ENCODE measurements at regions of chr16 and their contacts with region 1.

Region 1: DNA sequence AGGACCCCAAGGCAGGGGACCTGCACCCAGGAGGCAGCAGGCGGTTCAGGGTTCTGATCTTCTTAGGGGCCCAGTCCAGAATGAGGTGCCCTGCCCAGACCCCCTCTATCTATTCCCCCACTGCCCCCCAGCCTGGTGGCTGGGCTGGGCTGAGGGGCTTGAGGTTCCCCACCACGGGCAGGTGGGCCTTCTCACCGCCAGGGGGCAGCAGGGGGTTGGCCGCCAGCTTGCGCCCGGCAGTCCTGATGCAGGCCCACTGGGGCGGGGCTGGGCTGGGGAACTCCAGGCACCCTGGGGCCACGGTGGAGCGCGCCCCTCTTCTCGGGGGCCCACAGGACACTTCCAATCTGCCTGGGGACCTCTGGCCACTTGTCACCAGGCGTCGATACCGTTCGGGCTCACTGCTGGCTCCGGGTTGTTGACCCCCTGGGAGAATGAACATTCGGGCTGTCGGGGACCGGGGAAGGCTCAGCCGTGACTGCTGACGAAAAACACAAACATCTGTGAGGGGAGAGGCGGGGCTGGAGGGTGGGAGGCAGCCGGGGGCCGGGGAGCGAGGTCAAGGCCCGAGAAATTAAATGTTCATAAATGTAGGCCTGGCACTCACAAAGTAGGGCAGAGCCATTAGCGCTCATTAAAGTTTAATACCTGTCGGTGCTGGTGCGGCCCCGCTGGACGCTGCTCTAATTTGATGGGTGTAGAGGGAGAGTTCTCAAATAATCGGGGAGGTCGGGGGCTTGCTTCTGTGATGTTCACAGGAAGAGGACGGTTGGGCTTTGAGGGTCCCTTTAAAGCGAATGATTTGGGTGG is 219.2 kb upstream of the GSE1 start:
- DNase-seq: peak; percentile 89
- ATAC-seq: peak; percentile 68
- H3K4me3 Mint-ChIP-seq: peak overlapping the region; percentile 38
- H3K27ac Mint-ChIP-seq: no peak overlapping the region
- H3K4me1 Mint-ChIP-seq: peaks cover 43% of the 10 kb centered on the region
- H3K27me3 Mint-ChIP-seq: no peaks in the 10 kb centered on the region
- CTCF ChIP-seq: peak; percentile 94

Region 2: DNA sequence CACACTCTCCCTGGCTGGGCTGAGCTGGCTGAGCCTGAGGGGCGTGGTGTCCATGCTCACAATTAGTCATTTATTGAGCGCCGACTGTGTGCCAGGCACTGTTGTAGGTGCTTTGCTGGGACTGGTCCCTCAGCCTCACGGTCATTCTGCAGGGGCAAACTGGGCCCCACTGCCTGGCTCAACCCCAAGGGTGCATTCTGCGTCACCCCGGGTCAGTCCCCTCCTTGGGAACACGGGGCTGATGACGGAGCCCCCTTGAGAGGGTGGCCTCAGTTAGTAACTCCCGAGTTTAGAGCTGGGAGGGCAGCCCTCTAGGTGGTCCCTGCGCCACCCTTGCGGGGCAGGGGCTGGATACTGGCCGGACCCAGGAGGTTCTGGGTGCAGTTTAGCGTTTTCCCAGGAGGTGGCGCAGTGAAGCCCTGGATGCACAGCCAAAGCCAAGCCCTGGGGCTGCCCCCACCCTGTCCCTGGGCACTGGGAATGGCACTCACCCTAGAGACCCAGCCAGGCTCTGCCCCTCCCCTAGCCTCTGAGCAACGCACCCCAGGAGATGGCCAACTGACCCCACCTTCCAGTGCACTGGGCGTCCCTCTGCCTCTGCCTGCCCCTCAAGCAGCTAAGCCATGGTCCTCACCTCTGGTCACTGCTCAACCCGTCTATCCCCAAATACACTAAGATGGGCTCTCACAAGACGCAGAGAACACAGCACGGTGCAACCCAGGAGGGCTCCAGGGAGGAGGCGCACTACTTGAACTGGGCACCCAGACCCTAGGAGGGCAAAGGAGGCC is 23.9 kb before region 1 on chr16:
- CTCF ChIA-PET with region 1: interaction called, 16 read pairs
- POLR2A ChIA-PET with region 1: no interaction called
- DNase-seq: peak; percentile 84
- ATAC-seq: peak; percentile 73
- H3K4me3 Mint-ChIP-seq: no peak overlapping the region
- H3K27ac Mint-ChIP-seq: no peak overlapping the region
- H3K4me1 Mint-ChIP-seq: peaks cover 21% of the 10 kb centered on the region
- H3K27me3 Mint-ChIP-seq: peaks cover 9% of the 10 kb centered on the region
- CTCF ChIP-seq: peak; percentile 85

Region 3: DNA sequence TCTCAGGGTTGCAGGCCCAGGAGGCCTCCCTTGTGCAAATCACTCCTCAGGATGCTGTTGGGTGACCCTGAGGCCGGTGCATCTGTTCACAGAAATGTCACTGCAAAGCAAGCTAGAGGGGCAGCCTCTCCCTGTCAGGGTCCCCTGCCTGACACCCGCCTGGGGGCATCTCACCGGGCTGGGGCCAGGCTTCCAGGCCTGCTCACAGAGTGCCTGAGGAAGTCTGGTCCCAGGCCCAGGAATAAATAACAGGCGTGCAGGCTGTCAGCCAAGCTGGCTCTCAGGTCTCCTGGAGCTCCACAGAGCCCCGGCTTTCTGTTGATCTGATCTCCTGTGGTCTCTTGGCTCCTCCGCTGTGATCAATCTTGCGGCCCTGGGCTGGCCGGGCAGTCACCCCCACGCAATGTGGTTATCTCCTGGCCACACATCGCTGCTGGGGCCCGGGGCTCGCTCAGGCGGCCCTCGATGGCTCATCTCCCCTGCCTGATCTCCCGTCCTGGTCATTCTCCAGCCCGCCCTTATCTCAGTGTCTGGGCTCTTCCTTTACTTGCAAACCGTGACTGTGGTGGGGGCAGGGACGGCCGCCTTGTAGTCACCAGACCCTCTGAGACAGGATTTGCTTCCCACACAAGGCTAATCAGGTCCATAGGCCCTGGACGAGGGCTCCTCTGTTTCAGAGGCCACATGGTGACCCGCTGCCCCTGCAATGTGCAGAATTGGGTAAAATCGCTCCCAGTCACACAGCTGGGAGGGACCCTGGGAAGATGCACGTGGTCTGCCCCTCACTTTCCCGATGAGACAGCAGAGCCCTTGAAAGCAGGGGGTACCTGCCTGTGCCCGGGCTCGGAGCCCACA is 11.9 kb before region 1 on chr16:
- CTCF ChIA-PET with region 1: interaction called, 11 read pairs
- POLR2A ChIA-PET with region 1: no interaction called
- DNase-seq: no peak
- ATAC-seq: no peak
- H3K4me3 Mint-ChIP-seq: no peak overlapping the region
- H3K27ac Mint-ChIP-seq: peak overlapping the region; percentile 90
- H3K4me1 Mint-ChIP-seq: peaks cover 12% of the 10 kb centered on the region
- H3K27me3 Mint-ChIP-seq: no peaks in the 10 kb centered on the region
- CTCF ChIP-seq: no peak

Region 4: GRCh38 chr16:85428168-85428898 is 34.5 kb after region 1 on chr16:
- CTCF ChIA-PET with region 1: interaction called, 10 read pairs
- POLR2A ChIA-PET with region 1: no interaction called
- DNase-seq: peak; percentile 63
- ATAC-seq: peak; percentile 59
- H3K4me3 Mint-ChIP-seq: no peak overlapping the region
- H3K27ac Mint-ChIP-seq: no peak overlapping the region
- H3K4me1 Mint-ChIP-seq: peaks cover 7% of the 10 kb centered on the region; the same call in 1 of the 2 replicates
- H3K27me3 Mint-ChIP-seq: no peaks in the 10 kb centered on the region
- CTCF ChIP-seq: peak; percentile 27; the same call in 1 of the 2 replicates

Measured in WTC11 (cell line).